ENCODE measurements at regions of chr4 and their contacts with region 1.

Region 1: GRCh38 chr4:128060699-128061565 is at the start of gene LARP1B:
- DNase-seq: peak; percentile 94 to 97 (median 96)
- ATAC-seq: peak; percentile 93
- H3K4me3 ChIP-seq: peak within 1 kb of the TSS; percentile 79
- H3K27ac ChIP-seq: peak within 1 kb of the TSS; percentile 97
- H3K4me1 ChIP-seq: peaks cover 0 to 27% of the 10 kb centered on the region in 2 experiments; a peak in 4 of 5 replicates
- H3K27me3 ChIP-seq: no peaks in the 10 kb centered on the region
- CTCF ChIP-seq: no peak
- EP300 ChIP-seq: 0 out of 2 replicates have a peak, but pooled peaks have one; percentile 3
- POLR2A ChIP-seq: peak; percentile 84
- RAD21 ChIP-seq: no peak
- polyA plus RNA-seq, gene LARP1B: 19.2 to 25.4 TPM

Region 2: DNA sequence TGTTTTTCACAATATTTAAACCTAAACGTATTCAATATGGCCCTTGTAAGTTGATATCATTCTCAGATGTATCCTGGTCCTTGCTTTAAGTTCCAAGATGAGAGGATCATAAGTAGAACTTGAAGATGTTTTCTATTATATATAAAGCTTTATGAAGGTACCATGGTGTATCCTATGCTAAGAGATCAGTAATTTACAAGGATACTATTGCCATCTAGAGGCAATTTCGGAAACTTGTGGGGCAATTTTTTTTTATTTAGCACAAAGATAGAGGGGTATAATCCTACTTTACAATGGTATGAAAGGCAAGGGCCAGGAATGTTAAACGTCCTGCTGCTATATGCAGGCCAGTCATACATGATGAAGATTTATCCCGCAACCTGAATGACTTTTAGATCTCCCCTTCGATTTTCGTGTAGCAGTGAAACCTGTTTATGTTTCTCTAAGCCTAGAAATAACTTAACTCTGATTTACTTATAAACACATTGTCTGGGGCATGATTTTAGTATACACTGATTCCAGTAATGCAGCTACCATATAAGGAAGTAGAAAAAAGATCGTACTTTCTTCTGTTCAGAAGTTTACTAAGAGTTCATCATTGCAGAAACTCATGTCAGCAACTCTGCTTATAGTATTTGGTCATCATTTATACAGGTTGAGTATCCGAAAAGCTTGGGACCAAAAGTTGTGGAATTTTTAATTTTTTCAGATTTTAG is 328.2 kb before region 1 on chr4:
- CTCF ChIA-PET with region 1: no interaction called
- POLR2A ChIA-PET with region 1: no interaction called
- in situ Hi-C with region 1: no loop called
- intact Hi-C with region 1: loop called (anchors 10 kb)
- DNase-seq: peak in 2 of 4 experiments; percentile 42 to 43
- ATAC-seq: peak; percentile 86
- H3K4me3 ChIP-seq: no peak overlapping the region
- H3K27ac ChIP-seq: no peak overlapping the region
- H3K4me1 ChIP-seq: no peaks in the 10 kb centered on the region; a peak in 3 of 5 replicates
- H3K27me3 ChIP-seq: no peaks in the 10 kb centered on the region
- CTCF ChIP-seq: peak; percentile 38 to 76 (median 47); a peak in 4 of 6 replicates
- EP300 ChIP-seq: no peak
- POLR2A ChIP-seq: no peak
- RAD21 ChIP-seq: peak; percentile 63 to 81

Region 3: GRCh38 chr4:127782274-127783025 is 278.5 kb before region 1 on chr4 and contains the start of gene HSPA4L:
- CTCF ChIA-PET with region 1: no interaction called
- POLR2A ChIA-PET with region 1: no interaction called
- in situ Hi-C with region 1: no loop called
- intact Hi-C with region 1: loop called (anchors 5 kb)
- DNase-seq: peak in 1 of 4 experiments; percentile 33
- ATAC-seq: peak; percentile 62
- H3K4me3 ChIP-seq: peak within 1 kb of the TSS; percentile 54
- H3K27ac ChIP-seq: peak within 1 kb of the TSS; percentile 75
- H3K4me1 ChIP-seq: peaks cover 0 to 13% of the 10 kb centered on the region in 2 experiments; a peak in 2 of 5 replicates
- H3K27me3 ChIP-seq: no peaks in the 10 kb centered on the region
- CTCF ChIP-seq: peak; percentile 35 to 68 (median 47)
- EP300 ChIP-seq: no peak
- POLR2A ChIP-seq: peak; percentile 93
- RAD21 ChIP-seq: peak in 1 of 2 experiments; percentile 26; a peak in 1 of 4 replicates
- polyA plus RNA-seq, gene HSPA4L: 15.6 to 21.7 TPM